ENCODE measurements at regions of chr5 and their contacts with region 1.

Region 1: GRCh38 chr5:168227973-168228615 is 63.4 kb upstream of the WWC1 start:
- DNase-seq: peak; percentile 55
- H3K4me3 Mint-ChIP-seq: peak overlapping the region; percentile 23
- H3K27ac Mint-ChIP-seq: peak overlapping the region; percentile 57
- H3K4me1 Mint-ChIP-seq: peaks cover 23% of the 10 kb centered on the region
- H3K27me3 Mint-ChIP-seq: peaks cover 14% of the 10 kb centered on the region

Region 2: GRCh38 chr5:168123631-168124528 is 104.2 kb before region 1 on chr5:
- CTCF ChIA-PET with region 1: no interaction called
- POLR2A ChIA-PET with region 1: no interaction called
- intact Hi-C with region 1: loop called (anchors 1 kb)
- DNase-seq: no peak
- H3K4me3 Mint-ChIP-seq: no peak overlapping the region
- H3K27ac Mint-ChIP-seq: no peak overlapping the region
- H3K4me1 Mint-ChIP-seq: peaks cover 22% of the 10 kb centered on the region
- H3K27me3 Mint-ChIP-seq: no peaks in the 10 kb centered on the region

Region 3: DNA sequence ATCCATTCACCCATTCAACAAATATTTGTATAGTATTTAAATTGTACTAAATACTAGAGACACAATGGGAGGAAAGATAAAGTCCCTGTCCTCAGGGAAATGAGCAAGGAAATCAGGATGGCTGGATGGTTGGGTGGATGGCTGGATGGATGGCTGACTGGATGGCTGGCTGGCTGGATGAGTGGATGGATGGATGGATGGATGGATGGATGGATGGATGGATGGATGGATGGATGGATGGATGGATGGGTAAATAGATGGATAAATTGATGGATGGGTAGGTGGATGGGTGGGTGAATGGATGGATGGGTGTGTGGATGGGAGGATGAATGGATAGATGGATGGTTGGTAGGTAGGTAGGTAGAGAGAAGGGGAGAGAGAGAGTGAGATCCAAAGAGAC is 21.8 kb after region 1 on chr5:
- CTCF ChIA-PET with region 1: no interaction called
- POLR2A ChIA-PET with region 1: no interaction called
- intact Hi-C with region 1: loop called (anchors 1 kb)
- DNase-seq: no peak
- H3K4me3 Mint-ChIP-seq: no peak overlapping the region
- H3K27ac Mint-ChIP-seq: no peak overlapping the region
- H3K4me1 Mint-ChIP-seq: peaks cover 14% of the 10 kb centered on the region
- H3K27me3 Mint-ChIP-seq: peaks cover 18% of the 10 kb centered on the region

Region 4: DNA sequence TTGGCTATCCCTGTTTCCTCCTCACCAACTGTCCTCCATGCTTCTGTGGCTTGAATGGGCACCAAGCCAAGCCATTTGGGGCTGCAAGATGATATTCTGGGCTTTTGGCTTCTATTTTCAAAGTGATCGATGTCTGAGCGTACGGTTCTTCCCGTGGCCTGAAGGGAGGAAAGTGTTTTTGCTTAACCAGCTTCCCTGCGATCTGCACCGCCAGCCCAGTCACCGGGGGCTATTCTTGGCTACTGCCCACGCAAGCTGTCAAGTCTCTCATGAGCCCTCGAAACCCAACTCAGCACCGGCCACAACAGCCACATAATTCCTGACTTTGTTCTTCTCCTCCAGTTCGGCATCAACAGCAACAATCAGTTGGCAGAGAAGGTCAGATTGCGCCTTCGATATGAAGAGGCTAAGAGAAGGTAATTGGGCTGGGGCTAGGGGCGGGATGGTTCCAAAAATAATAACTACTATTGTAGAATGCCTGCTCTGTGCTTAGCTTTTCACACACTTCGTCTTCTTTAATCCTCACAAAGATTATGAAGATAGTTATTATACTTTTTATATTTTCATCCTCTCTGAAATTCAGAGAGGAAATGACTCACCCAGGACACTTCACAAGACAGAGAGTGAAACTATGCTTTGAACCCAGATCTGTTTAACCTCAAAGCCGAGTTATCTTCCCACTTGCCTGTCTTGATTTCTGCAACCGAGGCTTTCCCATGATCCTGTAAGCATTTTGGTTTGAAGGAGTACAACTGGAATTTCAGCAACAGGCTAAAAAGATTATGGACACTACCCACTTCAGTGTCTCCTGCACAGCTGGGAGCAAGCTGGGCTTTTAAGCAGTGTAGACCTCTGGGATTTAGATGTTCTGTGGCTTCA is 181.7 kb after region 1 on chr5:
- CTCF ChIA-PET with region 1: no interaction called
- POLR2A ChIA-PET with region 1: no interaction called
- intact Hi-C with region 1: loop called (anchors 1 kb)
- DNase-seq: peak; percentile 61
- H3K4me3 Mint-ChIP-seq: peak overlapping the region; percentile 13
- H3K27ac Mint-ChIP-seq: no peak overlapping the region
- H3K4me1 Mint-ChIP-seq: peaks cover 23% of the 10 kb centered on the region
- H3K27me3 Mint-ChIP-seq: peaks cover 6% of the 10 kb centered on the region

Measured in activated CD4-positive, alpha-beta memory T cell treated with anti-CD3 and anti-CD28 coated beads for 36 hours (primary cell).